Breast epithelium (tissue), 4 donors: ENCODE measurements at regions of chr10 and their contacts with region 1.

Region 1: DNA sequence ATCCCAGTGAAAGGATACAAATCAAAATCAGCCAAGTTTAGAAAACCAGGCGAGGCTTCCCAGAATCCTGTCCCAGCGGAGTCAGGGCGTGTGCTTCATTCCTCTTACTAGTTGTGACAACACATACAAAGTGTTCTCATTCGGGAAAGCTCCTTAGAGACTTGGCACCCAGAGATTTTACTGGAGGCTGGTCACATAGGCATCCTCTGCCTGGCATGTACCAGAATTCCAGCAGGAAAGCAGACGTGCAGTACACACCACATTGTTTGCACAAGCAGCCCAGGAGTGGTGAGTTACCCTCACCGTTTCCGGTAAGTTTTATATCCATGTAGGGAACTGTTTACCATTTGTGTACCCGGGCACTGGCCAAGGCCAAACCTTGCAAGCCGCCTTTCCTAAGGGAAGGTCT is 34.9 kb downstream of the MMRN2 start:
- DNase-seq: no peak
- H3K4me3 ChIP-seq: no peak overlapping the region
- H3K27ac ChIP-seq: no peak overlapping the region
- H3K4me1 ChIP-seq: no peaks in the 10 kb centered on the region
- H3K27me3 ChIP-seq: no peaks in the 10 kb centered on the region
- CTCF ChIP-seq: no peak
- POLR2A ChIP-seq: no peak

Region 2: GRCh38 chr10:86979977-86980795 is 57.6 kb after region 1 on chr10:
- intact Hi-C with region 1: no loop called
- DNase-seq: no peak
- H3K4me3 ChIP-seq: no peak overlapping the region
- H3K27ac ChIP-seq: peak overlapping the region; percentile 33 to 82
- H3K4me1 ChIP-seq: no peaks in the 10 kb centered on the region
- H3K27me3 ChIP-seq: no peaks in the 10 kb centered on the region
- CTCF ChIP-seq: no peak
- POLR2A ChIP-seq: no peak

Region 3: DNA sequence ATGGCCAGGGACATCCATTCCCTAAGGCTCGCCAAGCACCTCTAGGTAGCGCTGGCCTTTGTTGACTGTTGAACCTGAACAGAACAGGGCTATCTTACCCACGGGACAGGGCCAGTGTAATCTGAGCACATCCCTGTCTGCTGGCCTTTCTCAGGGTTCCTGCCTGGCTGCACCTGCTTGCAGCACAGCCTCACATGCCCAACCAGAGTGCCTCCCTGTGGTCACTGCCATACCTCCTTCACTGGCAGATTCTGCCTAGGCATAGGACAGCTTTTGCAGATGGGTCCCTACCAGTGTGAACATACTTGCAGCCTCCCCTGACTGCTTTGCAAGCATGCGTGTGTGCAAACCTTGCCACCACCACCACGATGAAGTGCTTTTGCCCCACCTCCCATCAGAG is 1821.4 kb after region 1 on chr10:
- intact Hi-C with region 1: loop called (anchors 10 kb)
- DNase-seq: no peak
- H3K4me3 ChIP-seq: no peak overlapping the region
- H3K27ac ChIP-seq: no peak overlapping the region
- H3K4me1 ChIP-seq: no peaks in the 10 kb centered on the region
- H3K27me3 ChIP-seq: no peaks in the 10 kb centered on the region
- CTCF ChIP-seq: no peak
- POLR2A ChIP-seq: no peak